Dendritic cell treated with granulocyte-macrophage colony-stimulating factor and Interleukin-4, amounts not matched to agents 40 ng/mL and 50 ng/mL, for 4 days (primary cell): ENCODE measurements at regions of chr9 and their contacts with region 1.

Region 1: GRCh38 chr9:70639853-70640814 is 225.7 kb upstream of the KLF9 start:
- H3K4me3 Mint-ChIP-seq: no peak overlapping the region
- H3K27ac Mint-ChIP-seq: no peak overlapping the region
- H3K4me1 Mint-ChIP-seq: no peaks in the 10 kb centered on the region
- H3K27me3 Mint-ChIP-seq: no peaks in the 10 kb centered on the region

Region 2: DNA sequence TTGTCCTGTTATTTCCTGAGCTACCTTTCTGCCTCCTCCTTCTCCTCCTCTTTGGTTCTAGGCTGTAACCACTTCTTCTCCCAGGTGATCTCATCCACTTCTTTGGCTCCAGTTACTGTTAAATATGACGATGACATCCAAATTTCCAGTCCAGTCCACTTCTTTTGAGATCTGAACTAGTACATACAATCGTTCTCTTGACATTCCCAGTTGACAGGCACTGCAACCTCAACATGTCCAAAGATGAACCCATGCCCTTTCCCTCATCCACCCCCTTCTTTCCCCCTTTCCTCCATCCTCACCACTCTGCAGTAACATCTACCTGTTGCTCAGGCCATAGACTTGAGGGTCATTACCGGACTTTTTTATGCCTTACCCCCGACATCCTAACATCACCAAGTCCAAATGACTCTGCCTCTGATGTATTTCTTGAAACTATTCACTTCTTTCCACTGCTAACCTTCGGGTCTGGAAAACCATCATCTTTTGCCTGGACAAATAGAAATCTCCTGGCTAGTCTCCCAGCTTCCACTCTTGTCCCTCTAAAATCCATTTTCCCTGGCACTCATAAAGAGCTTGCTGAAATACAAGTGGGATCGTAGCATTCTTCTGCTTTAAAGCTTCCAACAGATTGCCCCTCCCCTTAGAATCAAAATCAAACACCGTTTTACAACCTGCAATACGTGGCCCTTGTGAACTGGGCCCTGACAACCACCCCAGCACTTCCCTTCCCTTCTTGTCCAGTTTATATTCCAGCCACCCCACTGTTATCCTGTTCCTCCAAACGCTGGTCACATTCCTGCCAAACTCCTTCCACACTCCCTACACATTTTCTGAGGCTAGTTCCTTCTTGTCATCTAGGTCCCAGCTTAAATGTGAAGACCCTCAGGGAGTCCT is 257.2 kb before region 1 on chr9:
- intact Hi-C with region 1: no loop called
- H3K4me3 Mint-ChIP-seq: no peak overlapping the region
- H3K27ac Mint-ChIP-seq: no peak overlapping the region
- H3K4me1 Mint-ChIP-seq: no peaks in the 10 kb centered on the region
- H3K27me3 Mint-ChIP-seq: no peaks in the 10 kb centered on the region

Region 3: GRCh38 chr9:70534061-70534460 is 106.1 kb before region 1 on chr9:
- intact Hi-C with region 1: no loop called
- H3K4me3 Mint-ChIP-seq: no peak overlapping the region
- H3K27ac Mint-ChIP-seq: no peak overlapping the region
- H3K4me1 Mint-ChIP-seq: peaks cover 3% of the 10 kb centered on the region
- H3K27me3 Mint-ChIP-seq: peaks cover 1% of the 10 kb centered on the region

Region 4: DNA sequence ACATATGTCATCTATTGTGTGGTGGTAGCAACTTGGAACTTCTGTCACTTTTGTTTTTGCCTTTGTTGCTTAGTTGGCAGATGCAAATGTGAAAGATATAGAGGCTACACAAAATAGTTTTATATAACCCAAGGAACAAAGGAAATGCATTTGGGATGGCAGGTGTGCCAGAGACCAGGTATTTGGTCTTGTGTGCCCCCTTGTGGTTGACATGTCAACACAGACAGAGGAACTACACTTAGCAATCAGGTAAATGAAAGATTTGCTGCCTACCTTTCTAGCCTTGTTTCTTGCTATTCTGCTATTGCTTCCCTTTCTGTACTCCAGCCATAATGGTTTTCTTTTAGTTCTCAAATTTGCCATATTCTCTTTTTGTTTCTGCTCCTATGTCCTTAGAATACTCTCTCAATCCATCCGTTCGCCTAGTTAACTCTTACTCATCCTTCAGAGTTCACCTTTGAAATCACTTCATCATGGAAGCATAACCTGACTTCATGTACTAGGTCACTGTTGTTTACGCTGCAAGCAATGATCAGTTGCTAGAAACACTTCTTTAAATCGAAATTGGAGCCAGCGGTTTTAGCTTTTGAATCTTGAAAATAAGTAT is 361.7 kb after region 1 on chr9:
- intact Hi-C with region 1: loop called (anchors 5 kb)
- H3K4me3 Mint-ChIP-seq: no peak overlapping the region
- H3K27ac Mint-ChIP-seq: no peak overlapping the region
- H3K4me1 Mint-ChIP-seq: no peaks in the 10 kb centered on the region
- H3K27me3 Mint-ChIP-seq: no peaks in the 10 kb centered on the region